ENCODE measurements at regions of chr12 and their contacts with region 1.

Region 1: DNA sequence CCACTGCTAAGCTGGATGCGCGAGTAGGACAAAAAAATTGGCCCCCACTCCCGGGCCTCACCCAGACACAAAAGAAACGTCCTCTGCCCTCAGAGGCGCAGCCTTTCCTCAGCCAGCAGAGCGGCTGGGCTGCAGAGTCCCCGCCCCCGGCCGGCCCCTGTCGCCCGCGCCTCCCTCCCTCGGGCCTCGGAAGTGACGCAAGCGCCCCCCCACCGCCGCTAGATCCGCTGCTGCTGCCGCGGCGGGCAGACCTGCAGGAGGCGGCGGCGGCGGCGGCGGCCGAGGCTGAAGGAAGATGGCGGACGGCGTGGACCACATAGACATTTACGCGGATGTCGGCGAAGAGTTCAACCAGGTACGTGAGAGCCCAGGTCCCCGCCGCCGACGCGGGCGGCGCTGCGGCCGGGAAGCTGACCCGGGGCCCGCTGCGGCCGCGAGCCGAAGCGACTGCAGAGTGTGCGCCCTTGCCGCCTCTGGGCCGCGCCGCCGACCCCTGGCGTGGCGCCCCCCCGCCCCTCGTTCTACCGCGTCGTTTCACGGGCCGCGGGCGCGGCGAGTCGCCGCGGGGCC is at the start of gene CPSF6:
- DNase-seq: peak; percentile 94
- H3K4me3 Mint-ChIP-seq: peak within 1 kb of the TSS; percentile 100
- H3K27ac Mint-ChIP-seq: peak within 1 kb of the TSS; percentile 99
- H3K4me1 Mint-ChIP-seq: peaks cover 47% of the 10 kb centered on the region
- H3K27me3 Mint-ChIP-seq: peaks cover 7% of the 10 kb centered on the region
- total RNA-seq, gene CPSF6: 114 and 115 TPM in 2 replicates

Region 2: GRCh38 chr12:68745904-68746571 is 493.4 kb before region 1 on chr12 and contains the start of gene SLC35E3:
- intact Hi-C with region 1: loop called (anchors 1 kb)
- DNase-seq: peak; percentile 91
- H3K4me3 Mint-ChIP-seq: peak within 1 kb of the TSS; percentile 94
- H3K27ac Mint-ChIP-seq: peak within 1 kb of the TSS; percentile 87
- H3K4me1 Mint-ChIP-seq: peaks cover 50% of the 10 kb centered on the region
- H3K27me3 Mint-ChIP-seq: no peaks in the 10 kb centered on the region
- total RNA-seq, gene SLC35E3: 5.9 and 6.3 TPM in 2 replicates

Region 3: GRCh38 chr12:68831272-68831671 is 408.2 kb before region 1 on chr12:
- intact Hi-C with region 1: loop called (anchors 5 kb)
- DNase-seq: no peak
- H3K4me3 Mint-ChIP-seq: no peak overlapping the region
- H3K27ac Mint-ChIP-seq: no peak overlapping the region
- H3K4me1 Mint-ChIP-seq: peaks cover 29% of the 10 kb centered on the region
- H3K27me3 Mint-ChIP-seq: no peaks in the 10 kb centered on the region

Region 4: DNA sequence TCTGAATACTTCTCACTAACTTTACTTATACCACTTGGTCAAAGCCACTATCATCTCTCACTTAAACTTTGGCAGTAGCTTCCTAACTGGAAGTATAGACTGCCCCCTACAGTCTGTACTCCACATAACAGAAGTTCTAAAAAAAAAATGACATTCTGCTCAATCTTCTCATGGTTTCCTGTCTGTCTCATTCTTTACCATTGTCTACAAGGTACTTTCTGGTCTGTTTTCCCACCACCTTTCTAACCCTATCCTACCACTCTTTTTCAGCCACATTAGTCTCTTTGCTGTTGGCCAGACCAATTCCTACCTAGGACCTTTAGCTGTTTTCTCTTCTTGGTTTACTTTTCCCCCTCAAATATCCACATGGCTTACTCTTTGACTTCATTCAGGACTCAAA is 14.6 kb after region 1 on chr12:
- intact Hi-C with region 1: loop called (anchors 1 kb)
- DNase-seq: no peak
- H3K4me3 Mint-ChIP-seq: no peak overlapping the region
- H3K27ac Mint-ChIP-seq: peak overlapping the region; percentile 52
- H3K4me1 Mint-ChIP-seq: peaks cover 41% of the 10 kb centered on the region
- H3K27me3 Mint-ChIP-seq: no peaks in the 10 kb centered on the region

Region 5: DNA sequence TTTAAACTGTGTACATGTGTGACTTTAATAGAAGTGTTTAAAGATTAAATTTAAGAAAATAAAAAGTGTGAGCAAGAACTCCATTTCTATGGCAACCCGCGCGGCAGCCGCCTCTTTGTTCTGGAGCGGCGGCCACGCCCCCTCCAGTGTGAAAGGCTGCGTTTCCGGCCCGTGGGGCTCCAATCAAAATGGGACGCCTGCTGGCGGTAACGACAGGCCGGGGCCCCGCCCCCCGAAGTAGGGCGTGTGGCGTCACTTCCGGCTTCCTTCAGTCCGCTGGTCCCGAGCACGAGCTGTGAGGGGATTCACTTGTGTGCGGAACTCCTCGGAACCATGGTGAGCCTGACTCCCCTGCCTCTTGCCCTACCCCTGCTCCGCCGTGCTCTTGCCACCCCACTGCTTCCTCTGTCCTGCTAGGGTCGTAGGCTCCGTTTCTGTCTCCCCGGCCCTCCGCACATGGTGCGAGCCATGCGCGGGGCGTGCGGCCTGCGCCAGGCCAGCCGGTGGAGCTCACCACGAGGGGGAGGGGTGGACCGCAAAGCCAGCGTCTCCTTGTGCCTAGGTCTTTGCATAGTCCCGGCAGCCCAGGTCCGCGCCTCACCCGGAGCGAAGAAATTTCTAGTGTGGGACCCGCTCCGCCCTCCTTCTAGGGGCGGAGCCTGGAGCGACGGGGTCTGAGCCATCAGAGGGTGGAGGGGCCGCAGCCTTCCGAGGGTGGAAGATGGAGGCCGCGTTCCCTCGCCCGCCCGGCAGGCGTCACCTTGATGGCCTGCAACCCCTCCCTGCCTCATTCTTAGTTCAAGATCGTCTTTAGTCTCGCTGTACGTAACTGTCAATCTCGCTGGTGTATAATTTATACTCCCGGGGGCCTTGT is 346.0 kb after region 1 on chr12 and contains the start of gene CCT2:
- intact Hi-C with region 1: loop called (anchors 1 kb)
- DNase-seq: peak; percentile 94
- H3K4me3 Mint-ChIP-seq: peak within 1 kb of the TSS; percentile 98
- H3K27ac Mint-ChIP-seq: peak within 1 kb of the TSS; percentile 97
- H3K4me1 Mint-ChIP-seq: peaks cover 11% of the 10 kb centered on the region
- H3K27me3 Mint-ChIP-seq: no peaks in the 10 kb centered on the region
- total RNA-seq, gene CCT2: 442 and 447 TPM in 2 replicates

Region 6: GRCh38 chr12:69738351-69739286 is 499.2 kb after region 1 on chr12 and contains the start of gene RAB3IP:
- intact Hi-C with region 1: loop called (anchors 5 kb)
- DNase-seq: peak; percentile 88
- H3K4me3 Mint-ChIP-seq: peak within 1 kb of the TSS; percentile 95
- H3K27ac Mint-ChIP-seq: peak within 1 kb of the TSS; percentile 92
- H3K4me1 Mint-ChIP-seq: peaks cover 31% of the 10 kb centered on the region
- H3K27me3 Mint-ChIP-seq: peaks cover 36% of the 10 kb centered on the region
- total RNA-seq, gene RAB3IP: 29.8 and 36.1 TPM in 2 replicates